A549 (cell line): ENCODE measurements at regions of chr19 and their contacts with region 1.

Region 1: GRCh38 chr19:41001248-41001971 is 10.3 kb downstream of the CYP2B6 start:
- DNase-seq: peak in 1 of 2 experiments; percentile 45
- ATAC-seq: 0 out of 6 replicates have a peak, but pooled peaks of 1 of the 2 experiments have one; percentile 30
- H3K4me3 ChIP-seq: no peak overlapping the region
- H3K27ac ChIP-seq: no peak overlapping the region
- H3K4me1 ChIP-seq: peaks cover 18% of the 10 kb centered on the region
- CTCF ChIP-seq: no peak; the same call in 2 of the 3 replicates
- EP300 ChIP-seq: no peak
- POLR2A ChIP-seq: no peak
- RAD21 ChIP-seq: 0 out of 5 replicates have a peak, but pooled peaks of 1 of the 2 experiments have one; percentile 14

Region 2: GRCh38 chr19:40990972-40991381 is 10.4 kb before region 1 on chr19 and contains the start of gene CYP2B6:
- CTCF ChIA-PET with region 1: interaction called, 11 read pairs
- POLR2A ChIA-PET with region 1: no interaction called
- DNase-seq: no peak
- ATAC-seq: peak in 1 of 2 experiments; percentile 34; a peak in 4 of 6 replicates
- H3K4me3 ChIP-seq: no peak within 1 kb of the TSS
- H3K27ac ChIP-seq: no peak within 1 kb of the TSS
- H3K4me1 ChIP-seq: peaks cover 5% of the 10 kb centered on the region; the same call in 1 of the 3 replicates
- CTCF ChIP-seq: no peak
- EP300 ChIP-seq: no peak
- POLR2A ChIP-seq: no peak
- RAD21 ChIP-seq: no peak
- polyA plus RNA-seq, gene CYP2B6: 0.04 TPM in 1 of 2 replicates, not detected in the other

Region 3: DNA sequence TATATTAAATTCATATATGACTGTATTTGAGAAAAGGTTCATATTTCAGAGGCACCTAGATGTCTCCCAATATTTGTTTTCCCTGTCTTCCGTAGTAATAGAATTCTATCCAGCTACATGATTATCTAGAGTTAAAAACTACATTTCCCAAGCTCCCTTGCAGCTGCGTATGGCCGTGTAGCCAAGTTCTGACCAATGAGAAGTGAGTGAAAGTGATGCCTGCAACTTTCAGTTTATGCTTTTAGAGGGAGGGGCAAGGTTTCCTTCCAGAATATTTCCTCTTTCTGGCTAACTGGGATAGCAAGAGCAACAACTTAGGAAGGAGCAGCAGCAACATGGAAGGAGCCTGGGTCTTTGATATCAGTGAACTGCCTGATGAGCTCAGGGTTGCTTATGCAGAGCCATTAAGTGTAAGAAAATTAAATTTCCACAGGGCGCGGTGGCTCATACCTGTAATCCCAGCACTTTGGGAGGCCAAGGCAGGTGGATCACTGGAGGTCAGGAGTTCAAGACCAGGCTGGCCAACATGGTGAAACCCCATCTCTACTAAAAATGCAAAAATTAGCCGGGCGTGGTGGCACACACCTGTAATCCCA is 63.7 kb after region 1 on chr19:
- CTCF ChIA-PET with region 1: no interaction called
- POLR2A ChIA-PET with region 1: no interaction called
- DNase-seq: peak; percentile 69
- ATAC-seq: peak; percentile 65 to 94; a peak in 5 of 6 replicates
- H3K4me3 ChIP-seq: no peak overlapping the region
- H3K27ac ChIP-seq: no peak overlapping the region
- H3K4me1 ChIP-seq: no peaks in the 10 kb centered on the region
- CTCF ChIP-seq: no peak
- EP300 ChIP-seq: no peak
- POLR2A ChIP-seq: no peak
- RAD21 ChIP-seq: no peak